Activated CD8-positive, alpha-beta T cell treated with anti-CD3 and anti-CD28 coated beads for 36 hours (primary cell): ENCODE measurements at regions of chrX and their contacts with region 1.

Region 1: DNA sequence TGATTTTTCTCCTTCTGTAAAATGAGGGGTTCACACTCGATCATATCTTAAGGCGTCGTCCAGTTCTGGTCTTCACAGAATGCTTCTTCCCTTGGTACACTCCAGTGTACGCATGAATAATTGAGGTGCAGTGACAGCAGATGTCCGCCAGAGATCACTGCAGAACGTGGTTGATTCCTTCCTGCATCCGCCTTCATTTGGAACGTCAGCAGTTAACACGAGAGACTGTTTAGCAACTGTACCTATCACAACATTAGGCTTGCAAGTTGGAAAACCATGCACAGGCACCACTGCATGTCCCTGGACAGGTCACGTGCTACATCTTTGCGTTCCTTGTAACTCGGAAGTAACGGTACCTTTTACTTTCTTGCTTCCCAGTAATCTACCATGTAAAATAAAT is 66.0 kb upstream of the GEMIN8 start:
- DNase-seq: peak; percentile 51
- ATAC-seq: peak; percentile 87
- H3K4me3 Mint-ChIP-seq: no peak overlapping the region
- H3K27ac Mint-ChIP-seq: no peak overlapping the region
- H3K4me1 Mint-ChIP-seq: no peaks in the 10 kb centered on the region
- H3K27me3 Mint-ChIP-seq: peaks cover 3% of the 10 kb centered on the region
- CTCF ChIP-seq: peak; percentile 47

Region 2: DNA sequence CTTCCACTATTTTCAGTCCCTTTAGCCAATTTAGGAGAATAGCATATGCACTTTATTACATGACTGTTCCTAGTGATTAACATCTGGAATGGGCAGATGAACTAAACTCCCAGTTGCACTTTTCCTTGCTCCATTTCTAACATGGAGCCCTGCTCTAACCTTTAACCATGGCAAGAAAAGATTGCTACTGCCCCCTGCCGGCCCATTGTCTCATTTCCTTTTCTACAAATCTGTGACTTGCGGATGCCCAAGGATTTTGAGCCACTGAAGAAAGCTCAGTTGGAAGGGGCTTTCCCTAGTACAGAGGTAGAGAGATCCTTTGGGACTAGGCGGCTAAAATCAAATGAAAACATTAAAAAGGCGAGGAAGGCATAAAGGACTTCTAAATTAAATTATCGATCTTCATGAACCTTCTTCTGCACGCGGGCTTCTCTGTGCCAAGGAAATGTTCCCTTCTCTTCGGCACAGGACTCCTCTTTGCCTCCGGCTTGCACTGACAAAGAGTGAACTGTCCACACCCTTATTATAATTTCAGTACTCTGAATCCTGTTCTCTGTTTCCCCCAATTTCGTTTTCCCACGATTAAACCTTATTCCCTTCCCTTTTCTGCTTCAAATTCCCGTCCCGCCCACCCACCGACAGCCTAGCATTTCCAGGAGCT is 433.1 kb after region 1 on chrX:
- CTCF ChIA-PET with region 1: interaction called, 4 read pairs
- POLR2A ChIA-PET with region 1: no interaction called
- intact Hi-C with region 1: loop called (anchors 10 kb)
- DNase-seq: peak; percentile 72
- ATAC-seq: no peak
- H3K4me3 Mint-ChIP-seq: no peak overlapping the region
- H3K27ac Mint-ChIP-seq: no peak overlapping the region
- H3K4me1 Mint-ChIP-seq: peaks cover 2% of the 10 kb centered on the region
- H3K27me3 Mint-ChIP-seq: peaks cover 7% of the 10 kb centered on the region
- CTCF ChIP-seq: no peak